Activated T-helper 2 cell treated with anti-CD3 and anti-CD28 coated beads, Interferon-gamma antibody, Interleukin-2, Interleukin-4, amounts not matched to agents 10 μg/mL and 5 μg/mL and 100 μg/mL, durations not matched to agents 14 hours and 24 hours and 36 hours (primary cell): ENCODE measurements at regions of chr22 and their contacts with region 1.

Region 1: GRCh38 chr22:21867528-21868266 is at the start of gene MAPK1:
- DNase-seq: peak; percentile 92
- H3K4me3 Mint-ChIP-seq: peak within 1 kb of the TSS; percentile 96
- H3K27ac Mint-ChIP-seq: peak within 1 kb of the TSS; percentile 98
- H3K4me1 Mint-ChIP-seq: peaks cover 31% of the 10 kb centered on the region
- H3K27me3 Mint-ChIP-seq: peaks cover 13% of the 10 kb centered on the region
- total RNA-seq, gene MAPK1: 150 and 153 TPM in 2 replicates

Region 2: DNA sequence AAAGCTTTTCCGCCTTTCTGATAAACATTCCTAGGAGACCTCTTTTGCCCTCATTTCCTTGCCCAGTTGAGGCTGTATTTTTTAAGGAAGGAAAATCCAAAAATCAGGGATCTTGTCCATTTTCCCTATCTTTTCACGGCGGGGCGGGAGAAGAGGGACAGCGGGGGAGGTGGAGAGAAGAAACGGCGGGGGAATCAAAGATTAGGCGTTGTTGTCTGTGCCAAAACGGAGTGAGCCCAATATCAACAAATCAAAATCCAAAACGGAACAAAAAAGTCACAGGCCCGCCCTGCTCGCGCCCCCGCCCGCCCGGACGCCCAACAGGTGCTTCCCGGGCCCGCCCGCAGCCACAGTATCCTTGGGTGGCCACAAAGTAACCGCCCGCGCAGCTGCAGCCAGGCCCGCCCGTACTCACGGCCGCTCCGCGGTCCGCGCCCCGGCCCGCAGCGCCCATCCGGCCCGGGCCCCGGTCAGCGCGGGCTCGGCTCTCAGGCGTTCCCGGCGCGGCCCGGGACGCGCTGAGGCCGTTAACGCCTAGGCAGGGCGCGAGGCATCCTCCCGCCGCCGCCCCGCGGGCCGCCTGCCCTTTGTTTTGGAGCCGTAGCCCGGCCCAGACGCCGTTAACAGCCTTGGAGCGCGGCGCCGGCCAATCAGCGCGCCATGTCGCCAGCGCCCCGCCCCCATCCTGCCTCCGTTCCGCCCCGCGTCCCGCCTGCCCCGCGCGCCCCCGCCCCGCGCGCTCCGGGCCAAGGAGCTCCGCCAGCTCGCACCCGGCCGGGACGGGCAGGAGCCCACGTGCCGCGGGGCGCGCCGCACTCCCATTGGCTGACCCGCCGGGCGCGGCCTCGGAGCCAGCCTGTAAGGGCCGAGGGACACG is 132.3 kb before region 1 on chr22 and contains the start of gene YPEL1:
- intact Hi-C with region 1: loop called (anchors 2 kb)
- DNase-seq: peak; percentile 96
- H3K4me3 Mint-ChIP-seq: peak within 1 kb of the TSS; percentile 86
- H3K27ac Mint-ChIP-seq: peak within 1 kb of the TSS; percentile 84
- H3K4me1 Mint-ChIP-seq: peaks cover 18% of the 10 kb centered on the region
- H3K27me3 Mint-ChIP-seq: peaks cover 10% of the 10 kb centered on the region
- total RNA-seq, gene YPEL1: 1.5 and 1.9 TPM in 2 replicates

Region 3: GRCh38 chr22:21760640-21761039 is 107.1 kb before region 1 on chr22:
- intact Hi-C with region 1: loop called (anchors 1 kb)
- DNase-seq: no peak
- H3K4me3 Mint-ChIP-seq: no peak overlapping the region
- H3K27ac Mint-ChIP-seq: no peak overlapping the region
- H3K4me1 Mint-ChIP-seq: peaks cover 53% of the 10 kb centered on the region
- H3K27me3 Mint-ChIP-seq: no peaks in the 10 kb centered on the region

Region 4: GRCh38 chr22:21791635-21792625 is 75.8 kb before region 1 on chr22:
- intact Hi-C with region 1: loop called (anchors 1 kb)
- DNase-seq: peak; percentile 11
- H3K4me3 Mint-ChIP-seq: no peak overlapping the region
- H3K27ac Mint-ChIP-seq: peak overlapping the region; percentile 83
- H3K4me1 Mint-ChIP-seq: peaks cover 18% of the 10 kb centered on the region
- H3K27me3 Mint-ChIP-seq: no peaks in the 10 kb centered on the region

Region 5: GRCh38 chr22:21816787-21817496 is 50.8 kb before region 1 on chr22:
- intact Hi-C with region 1: loop called (anchors 1 kb)
- DNase-seq: peak; percentile 24
- H3K4me3 Mint-ChIP-seq: peak overlapping the region; percentile 68
- H3K27ac Mint-ChIP-seq: peak overlapping the region; percentile 88
- H3K4me1 Mint-ChIP-seq: peaks cover 54% of the 10 kb centered on the region
- H3K27me3 Mint-ChIP-seq: no peaks in the 10 kb centered on the region